ENCODE measurements at regions of chr11 and their contacts with region 1.

Region 1: DNA sequence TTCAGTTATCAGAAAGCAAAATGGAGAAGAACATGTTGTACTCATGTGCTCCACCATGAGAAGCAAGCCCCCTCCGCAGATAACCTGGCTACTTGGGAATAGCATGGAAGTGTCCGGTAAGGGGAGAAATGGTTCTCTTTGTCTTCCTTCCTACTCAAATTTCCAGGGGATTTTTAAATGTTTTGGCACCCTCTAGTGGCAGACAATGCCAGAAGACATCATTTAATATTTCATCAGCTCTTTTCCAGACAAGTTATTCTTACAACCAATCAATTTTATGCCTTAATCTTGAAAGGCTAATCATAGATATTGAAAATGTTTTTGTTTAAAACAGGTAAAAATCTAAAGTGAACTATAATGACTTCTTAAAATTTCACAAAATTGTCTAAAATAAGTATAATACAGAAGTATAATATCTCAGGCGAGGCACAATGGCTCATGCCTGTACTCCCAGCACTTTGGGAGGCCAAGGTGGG is 15.7 kb downstream of the CRTAM start:
- DNase-seq: no peak
- H3K4me3 ChIP-seq: no peak overlapping the region
- H3K27ac ChIP-seq: no peak overlapping the region
- H3K4me1 ChIP-seq: peaks cover 0 to 57% (median 16%) of the 10 kb centered on the region in 6 donors
- H3K27me3 ChIP-seq: no peaks in the 10 kb centered on the region
- CTCF ChIP-seq: peak; percentile 47 to 83 (median 70)
- POLR2A ChIP-seq: no peak

Region 2: DNA sequence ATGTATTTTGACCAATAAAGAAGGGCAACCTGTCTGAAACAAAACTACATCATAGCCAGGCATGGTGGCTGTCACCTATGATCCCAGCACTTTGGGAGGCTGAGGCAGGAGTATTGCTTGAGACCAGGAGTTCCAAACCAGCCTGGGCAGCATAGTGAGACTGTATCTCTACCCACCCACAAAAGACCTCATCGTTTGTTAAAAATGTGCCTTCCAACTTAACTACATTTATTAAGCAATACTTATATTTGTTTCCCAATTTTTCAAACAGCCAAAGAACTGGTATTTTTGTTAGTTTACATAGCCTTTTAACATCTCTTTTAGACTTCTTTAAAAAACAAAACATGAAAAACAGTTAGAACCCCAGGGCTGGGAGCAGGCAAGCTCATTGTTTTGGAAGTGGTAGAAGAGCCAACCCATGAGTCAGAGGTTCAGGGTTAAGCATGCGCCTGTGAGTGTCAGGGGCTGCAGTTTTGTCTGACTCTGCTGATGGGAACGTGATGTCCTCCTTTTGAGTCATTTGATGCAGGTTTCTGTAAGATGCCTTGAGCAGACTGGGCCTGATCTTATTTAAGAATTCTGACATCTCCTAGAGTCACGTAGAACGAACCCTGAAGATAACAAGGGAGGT is 69.6 kb before region 1 on chr11:
- intact Hi-C with region 1: no loop called
- DNase-seq: no peak
- H3K4me3 ChIP-seq: no peak overlapping the region
- H3K27ac ChIP-seq: no peak overlapping the region
- H3K4me1 ChIP-seq: peaks cover under 1 to 44% (median 27%) of the 10 kb centered on the region in 6 donors
- H3K27me3 ChIP-seq: no peaks in the 10 kb centered on the region
- CTCF ChIP-seq: no peak
- POLR2A ChIP-seq: no peak

Region 3: GRCh38 chr11:122796128-122796717 is 57.8 kb before region 1 on chr11:
- intact Hi-C with region 1: loop called (anchors 5 kb)
- DNase-seq: peak; percentile 85
- H3K4me3 ChIP-seq: no peak overlapping the region
- H3K27ac ChIP-seq: no peak overlapping the region
- H3K4me1 ChIP-seq: peaks cover 0 to 18% (median 2%) of the 10 kb centered on the region in 6 donors
- H3K27me3 ChIP-seq: no peaks in the 10 kb centered on the region
- CTCF ChIP-seq: peak; percentile 66 to 91 (median 88)
- POLR2A ChIP-seq: no peak

Region 4: GRCh38 chr11:123145220-123145619 is 291.2 kb after region 1 on chr11:
- intact Hi-C with region 1: no loop called
- DNase-seq: no peak
- H3K4me3 ChIP-seq: no peak overlapping the region
- H3K27ac ChIP-seq: peak overlapping the region in 5 of 8 donors; percentile 52 to 76 (median 64)
- H3K4me1 ChIP-seq: peaks cover 0 to 20% (median 8%) of the 10 kb centered on the region in 6 donors
- H3K27me3 ChIP-seq: no peaks in the 10 kb centered on the region
- CTCF ChIP-seq: no peak
- POLR2A ChIP-seq: no peak

Measured in spleen (tissue), 13 donors.